ENCODE measurements at regions of chr12 and their contacts with region 1.

Region 1: DNA sequence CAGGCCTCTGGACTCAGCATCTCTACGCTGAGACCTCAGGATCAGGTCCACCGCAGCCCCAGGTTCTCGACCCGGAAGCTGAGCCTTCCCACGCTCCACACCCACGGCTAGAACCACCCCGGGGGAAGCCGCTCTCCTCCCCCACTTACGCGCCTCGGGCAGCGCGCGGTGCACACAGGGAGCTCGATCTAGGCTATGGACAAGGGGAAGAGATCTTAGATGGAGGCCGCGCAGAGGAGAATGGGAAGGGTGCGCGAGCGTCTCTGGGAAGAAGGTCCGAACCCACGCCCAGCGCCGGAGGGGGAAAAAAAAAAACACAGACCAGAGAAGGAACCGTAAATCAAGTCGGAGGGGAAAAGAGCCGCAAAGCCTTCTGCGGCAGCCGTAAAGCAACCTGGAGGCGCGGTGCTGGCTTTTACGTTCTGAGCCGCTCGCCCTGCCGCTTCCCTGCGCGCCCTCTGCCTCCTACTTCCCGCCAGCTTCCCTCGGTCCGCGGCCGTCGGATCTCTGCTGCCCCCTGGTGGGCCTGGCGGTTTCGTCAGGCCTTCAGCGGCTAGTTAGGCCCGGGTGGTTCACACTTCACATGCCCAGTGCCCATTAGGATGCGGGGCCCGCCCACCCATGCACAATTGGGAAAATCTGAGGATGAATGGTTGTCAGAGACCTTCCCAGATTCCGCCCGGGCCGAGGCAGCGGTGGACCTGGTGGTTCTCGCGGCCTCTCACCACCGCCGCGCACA is at the start of gene RAD52:
- DNase-seq: peak; percentile 98
- H3K4me3 Mint-ChIP-seq: peak within 1 kb of the TSS; percentile 85
- H3K27ac Mint-ChIP-seq: peak within 1 kb of the TSS; percentile 82
- H3K4me1 Mint-ChIP-seq: peaks cover 47% of the 10 kb centered on the region
- H3K27me3 Mint-ChIP-seq: peaks cover 3% of the 10 kb centered on the region
- total RNA-seq, gene RAD52: 14.5 to 14.9 TPM

Region 2: DNA sequence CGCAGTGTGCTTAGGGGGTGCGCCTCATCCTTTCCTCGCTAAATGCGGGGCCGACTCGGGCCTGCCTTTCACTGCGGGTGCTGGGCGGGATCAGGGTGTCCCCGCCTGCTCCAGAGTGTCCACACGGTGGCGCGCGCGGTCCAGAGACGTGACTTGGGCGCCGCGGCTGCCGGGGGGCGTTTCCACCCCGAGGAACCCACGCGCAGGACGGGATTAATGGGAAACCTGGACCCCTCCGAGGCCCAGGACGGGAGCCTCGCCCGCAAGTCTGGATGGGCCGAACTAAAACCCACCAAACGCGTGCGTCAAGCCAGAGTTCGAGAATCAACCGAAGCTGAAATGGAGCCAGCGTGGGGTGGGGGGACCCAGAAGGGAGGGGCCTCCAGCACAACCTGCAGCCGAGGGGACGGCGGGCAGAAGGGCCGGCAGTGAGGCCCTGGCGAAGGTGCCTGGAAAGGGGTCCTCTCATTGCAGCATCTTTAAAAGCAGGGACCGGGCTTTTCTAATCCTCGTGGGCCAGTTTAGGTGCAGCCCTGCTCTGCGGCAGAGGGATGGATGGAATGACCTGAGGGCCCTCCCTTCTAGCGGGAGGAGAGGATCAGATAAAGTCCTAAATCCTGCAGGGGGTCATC is 379.7 kb before region 1 on chr12:
- CTCF ChIA-PET with region 1: interaction called, 18 read pairs
- POLR2A ChIA-PET with region 1: interaction called, 7 read pairs
- DNase-seq: peak; percentile 87
- H3K4me3 Mint-ChIP-seq: peak overlapping the region; percentile 78
- H3K27ac Mint-ChIP-seq: peak overlapping the region; percentile 10
- H3K4me1 Mint-ChIP-seq: peaks cover 78% of the 10 kb centered on the region
- H3K27me3 Mint-ChIP-seq: no peaks in the 10 kb centered on the region

Region 3: DNA sequence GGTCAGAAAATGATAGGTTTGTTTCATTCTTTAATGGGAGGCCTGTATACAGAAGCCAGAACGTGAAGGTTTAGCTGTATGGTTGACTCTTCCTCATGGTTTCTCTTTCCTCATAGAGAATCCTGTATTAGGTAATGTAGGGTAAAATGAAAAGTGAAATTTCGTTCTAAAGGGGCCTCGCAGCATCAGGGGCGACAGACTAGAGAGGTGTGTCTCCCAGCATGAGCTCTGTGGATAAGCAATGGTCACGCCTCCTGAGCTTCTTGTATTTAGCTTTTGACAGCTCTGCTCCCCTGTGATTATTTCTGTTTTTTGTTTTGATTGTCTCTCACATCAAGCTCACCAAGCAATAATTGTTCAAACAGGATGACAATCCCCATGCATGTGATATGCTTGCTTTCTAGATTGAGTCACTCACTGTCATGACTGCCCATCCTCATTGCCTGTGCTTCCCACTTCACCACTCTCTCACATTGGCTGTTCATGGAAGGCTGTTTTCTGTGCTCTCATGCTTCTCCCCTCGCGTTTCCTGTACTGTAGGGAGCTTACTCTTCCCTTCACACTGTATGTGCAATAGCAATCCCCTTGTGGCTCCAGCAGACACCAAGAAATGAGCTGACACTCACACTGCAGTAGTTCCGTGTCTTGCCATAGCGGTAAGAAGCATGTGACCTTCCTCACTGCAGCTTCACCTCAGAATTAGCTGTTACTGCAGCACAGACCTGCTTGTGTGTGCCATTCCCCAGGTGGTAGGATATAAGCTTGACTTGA is 44.2 kb before region 1 on chr12:
- CTCF ChIA-PET with region 1: interaction called, 10 read pairs
- POLR2A ChIA-PET with region 1: interaction called, 7 read pairs
- DNase-seq: peak; percentile 29
- H3K4me3 Mint-ChIP-seq: peak overlapping the region; percentile 2
- H3K27ac Mint-ChIP-seq: peak overlapping the region; percentile 62
- H3K4me1 Mint-ChIP-seq: peaks cover 30% of the 10 kb centered on the region
- H3K27me3 Mint-ChIP-seq: no peaks in the 10 kb centered on the region

Region 4: DNA sequence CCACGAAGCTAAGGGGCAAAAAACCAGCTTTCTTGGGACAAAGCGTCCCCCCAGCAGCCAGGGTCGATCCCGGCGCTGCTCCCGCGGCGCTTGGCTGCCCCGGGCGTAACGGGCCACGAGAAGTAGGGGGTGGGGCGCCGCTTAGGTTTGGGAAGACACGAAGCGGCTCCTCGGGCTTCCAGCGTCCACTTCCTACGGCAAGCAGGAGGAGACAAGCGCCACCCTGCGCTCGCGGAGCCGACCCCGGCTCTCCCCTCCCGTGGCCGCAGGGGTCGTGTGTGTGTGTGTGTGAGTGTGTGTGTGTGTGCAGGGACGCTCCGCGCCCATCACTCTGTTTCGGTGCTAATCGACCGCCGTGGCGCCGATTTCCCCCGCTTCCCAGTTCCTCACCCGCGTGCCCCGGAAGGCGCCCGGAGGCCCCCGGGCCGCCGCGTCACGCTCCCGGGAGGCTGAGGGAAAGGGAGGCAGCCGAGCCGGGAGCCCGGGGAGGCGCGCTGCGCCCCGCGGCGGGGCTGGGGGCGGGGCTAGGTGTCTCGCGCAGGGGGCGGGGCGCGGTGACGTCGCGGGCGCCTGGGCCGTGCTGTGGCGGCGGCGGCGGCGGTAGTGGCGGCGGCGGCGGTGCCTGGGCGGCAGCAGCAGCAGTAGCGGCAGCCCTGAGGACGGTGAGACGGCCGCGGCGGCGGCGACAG is 41.2 kb after region 1 on chr12 and contains the start of gene ERC1:
- CTCF ChIA-PET with region 1: interaction called, 10 read pairs
- POLR2A ChIA-PET with region 1: interaction called, 28 read pairs
- DNase-seq: peak; percentile 83
- H3K4me3 Mint-ChIP-seq: peak within 1 kb of the TSS; percentile 85
- H3K27ac Mint-ChIP-seq: peak within 1 kb of the TSS; percentile 84
- H3K4me1 Mint-ChIP-seq: peaks cover 40% of the 10 kb centered on the region
- H3K27me3 Mint-ChIP-seq: peaks cover 5% of the 10 kb centered on the region
- total RNA-seq, gene ERC1: 33.5 to 37.9 TPM

Region 5: GRCh38 chr12:1093166-1093751 is 143.6 kb after region 1 on chr12:
- CTCF ChIA-PET with region 1: interaction called, 10 read pairs
- POLR2A ChIA-PET with region 1: no interaction called
- DNase-seq: peak; percentile 24
- H3K4me3 Mint-ChIP-seq: no peak overlapping the region
- H3K27ac Mint-ChIP-seq: no peak overlapping the region
- H3K4me1 Mint-ChIP-seq: peaks cover 6% of the 10 kb centered on the region
- H3K27me3 Mint-ChIP-seq: no peaks in the 10 kb centered on the region

Measured in activated CD4-positive, alpha-beta memory T cell treated with anti-CD3 and anti-CD28 coated beads, Interleukin-2, amount 10 ng/mL, durations not matched to agents 7 days and 5 days (primary cell).